A673 (cell line): ENCODE measurements at regions of chr2 and their contacts with region 1.

Region 1: DNA sequence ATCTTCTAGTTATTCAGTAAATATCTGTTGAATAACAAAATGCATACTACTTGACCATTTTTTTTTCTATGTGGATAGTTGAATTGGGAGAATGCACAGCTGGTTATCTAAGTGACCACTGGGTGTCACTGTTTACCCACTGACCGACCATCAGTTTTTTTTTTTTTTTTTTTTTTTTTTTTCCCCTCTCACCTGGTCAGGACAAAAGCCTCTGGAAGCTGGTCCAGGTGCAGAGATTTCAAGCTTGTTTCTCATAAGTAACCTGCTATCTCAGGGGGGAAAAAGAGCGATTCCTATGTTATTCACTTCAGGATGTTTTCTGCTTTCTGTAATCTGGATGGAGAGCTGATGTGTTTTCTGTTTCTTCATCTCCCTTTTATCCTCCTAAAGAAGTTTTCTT is 256.0 kb downstream of the DCDC2C start:
- DNase-seq: peak; percentile 58
- H3K4me3 ChIP-seq: no peak overlapping the region
- H3K27ac ChIP-seq: peak overlapping the region; percentile 78
- H3K4me1 ChIP-seq: peaks cover 70% of the 10 kb centered on the region
- H3K27me3 ChIP-seq: no peaks in the 10 kb centered on the region
- CTCF ChIP-seq: peak; percentile 89

Region 2: GRCh38 chr2:3728104-3729054 is 231.0 kb before region 1 on chr2:
- CTCF ChIA-PET with region 1: interaction called, 7 read pairs
- POLR2A ChIA-PET with region 1: interaction called, 3 read pairs
- intact Hi-C with region 1: loop called (anchors 5 kb)
- DNase-seq: peak; percentile 83
- H3K4me3 ChIP-seq: peak overlapping the region; percentile 12
- H3K27ac ChIP-seq: no peak overlapping the region
- H3K4me1 ChIP-seq: peaks cover 6% of the 10 kb centered on the region
- H3K27me3 ChIP-seq: no peaks in the 10 kb centered on the region
- CTCF ChIP-seq: peak; percentile 65

Region 3: DNA sequence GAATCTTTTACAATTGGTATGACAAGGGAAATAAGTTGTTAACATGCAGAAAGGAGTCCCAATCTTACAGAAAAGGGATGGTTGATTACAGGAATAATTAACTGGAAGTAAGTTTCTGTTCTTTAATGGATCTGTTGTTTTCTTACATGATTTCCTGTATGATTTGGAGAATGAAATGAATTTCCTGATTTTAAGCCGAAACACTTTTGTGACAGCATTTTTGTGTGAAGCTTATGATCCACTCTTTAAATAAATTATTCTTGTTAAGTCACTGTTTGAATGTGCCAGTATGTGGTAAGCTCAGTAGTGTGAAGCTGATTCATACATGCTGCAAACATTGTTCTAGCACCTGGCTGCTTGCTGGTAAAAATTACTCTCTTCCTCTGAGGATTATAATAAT is 260.2 kb after region 1 on chr2:
- CTCF ChIA-PET with region 1: no interaction called
- POLR2A ChIA-PET with region 1: no interaction called
- intact Hi-C with region 1: loop called (anchors 1 kb)
- DNase-seq: peak; percentile 93
- H3K4me3 ChIP-seq: no peak overlapping the region
- H3K27ac ChIP-seq: peak overlapping the region; percentile 74
- H3K4me1 ChIP-seq: peaks cover 39% of the 10 kb centered on the region
- H3K27me3 ChIP-seq: no peaks in the 10 kb centered on the region
- CTCF ChIP-seq: no peak

Region 4: GRCh38 chr2:4465671-4466070 is 506.3 kb after region 1 on chr2:
- CTCF ChIA-PET with region 1: no interaction called
- POLR2A ChIA-PET with region 1: no interaction called
- intact Hi-C with region 1: no loop called
- DNase-seq: peak; percentile 15
- H3K4me3 ChIP-seq: no peak overlapping the region
- H3K27ac ChIP-seq: no peak overlapping the region
- H3K4me1 ChIP-seq: peaks cover 6% of the 10 kb centered on the region
- H3K27me3 ChIP-seq: no peaks in the 10 kb centered on the region
- CTCF ChIP-seq: no peak

Region 5: DNA sequence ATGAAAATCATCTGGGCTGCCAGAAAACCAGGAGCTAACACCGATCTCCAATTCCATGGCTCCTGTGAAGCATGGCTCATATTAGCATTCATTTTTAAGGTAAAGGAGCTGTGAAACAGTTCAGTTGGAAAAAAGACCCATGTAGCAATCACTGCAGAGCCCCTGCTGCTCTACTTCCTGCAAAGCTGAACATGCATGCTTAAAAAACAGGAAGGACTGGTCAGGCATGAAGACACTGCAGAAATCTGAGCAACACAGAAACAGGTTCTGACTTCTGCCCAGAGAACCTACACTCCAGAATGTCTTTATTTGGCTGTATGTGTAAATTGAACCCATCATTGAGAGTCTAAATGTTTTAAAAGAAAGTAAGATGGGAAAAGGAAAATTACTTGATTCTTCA is 694.6 kb after region 1 on chr2:
- CTCF ChIA-PET with region 1: interaction called, 10 read pairs
- POLR2A ChIA-PET with region 1: no interaction called
- intact Hi-C with region 1: no loop called
- DNase-seq: peak; percentile 87
- H3K4me3 ChIP-seq: no peak overlapping the region
- H3K27ac ChIP-seq: peak overlapping the region; percentile 88
- H3K4me1 ChIP-seq: peaks cover 38% of the 10 kb centered on the region
- H3K27me3 ChIP-seq: no peaks in the 10 kb centered on the region
- CTCF ChIP-seq: no peak

Region 6: DNA sequence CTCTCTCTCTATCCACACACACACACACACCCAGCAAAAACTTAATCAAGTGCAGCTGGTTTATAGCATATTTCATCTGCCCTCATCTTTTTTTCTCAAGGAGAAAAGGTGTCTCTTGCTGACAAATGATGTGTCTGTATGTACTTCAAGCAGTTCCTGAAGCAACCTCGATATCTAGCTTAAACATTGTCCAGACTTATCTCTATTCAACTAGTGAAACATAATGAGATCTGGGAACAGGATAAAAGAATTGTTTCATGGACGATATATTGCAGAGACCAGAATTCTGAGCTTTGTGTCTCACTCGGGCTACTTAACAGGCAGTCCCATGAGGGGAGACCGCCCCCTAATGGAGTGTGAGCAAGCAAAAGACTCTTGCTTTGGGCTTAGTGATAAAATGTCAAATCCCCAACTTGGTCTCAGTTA is 803.6 kb after region 1 on chr2:
- CTCF ChIA-PET with region 1: interaction called, 29 read pairs
- POLR2A ChIA-PET with region 1: no interaction called
- intact Hi-C with region 1: loop called (anchors 5 kb)
- DNase-seq: peak; percentile 94
- H3K4me3 ChIP-seq: no peak overlapping the region
- H3K27ac ChIP-seq: peak overlapping the region; percentile 84
- H3K4me1 ChIP-seq: peaks cover 42% of the 10 kb centered on the region
- H3K27me3 ChIP-seq: no peaks in the 10 kb centered on the region
- CTCF ChIP-seq: peak; percentile 93

Region 7: GRCh38 chr2:5098286-5098685 is 1138.9 kb after region 1 on chr2:
- CTCF ChIA-PET with region 1: no interaction called
- POLR2A ChIA-PET with region 1: no interaction called
- intact Hi-C with region 1: no loop called
- DNase-seq: no peak
- H3K4me3 ChIP-seq: no peak overlapping the region
- H3K27ac ChIP-seq: no peak overlapping the region
- H3K4me1 ChIP-seq: no peaks in the 10 kb centered on the region
- H3K27me3 ChIP-seq: no peaks in the 10 kb centered on the region
- CTCF ChIP-seq: no peak

Region 8: GRCh38 chr2:5459041-5459440 is 1499.7 kb after region 1 on chr2:
- CTCF ChIA-PET with region 1: interaction called, 12 read pairs
- POLR2A ChIA-PET with region 1: no interaction called
- intact Hi-C with region 1: no loop called
- DNase-seq: no peak
- H3K4me3 ChIP-seq: no peak overlapping the region
- H3K27ac ChIP-seq: no peak overlapping the region
- H3K4me1 ChIP-seq: no peaks in the 10 kb centered on the region
- H3K27me3 ChIP-seq: no peaks in the 10 kb centered on the region
- CTCF ChIP-seq: no peak

Region 9: DNA sequence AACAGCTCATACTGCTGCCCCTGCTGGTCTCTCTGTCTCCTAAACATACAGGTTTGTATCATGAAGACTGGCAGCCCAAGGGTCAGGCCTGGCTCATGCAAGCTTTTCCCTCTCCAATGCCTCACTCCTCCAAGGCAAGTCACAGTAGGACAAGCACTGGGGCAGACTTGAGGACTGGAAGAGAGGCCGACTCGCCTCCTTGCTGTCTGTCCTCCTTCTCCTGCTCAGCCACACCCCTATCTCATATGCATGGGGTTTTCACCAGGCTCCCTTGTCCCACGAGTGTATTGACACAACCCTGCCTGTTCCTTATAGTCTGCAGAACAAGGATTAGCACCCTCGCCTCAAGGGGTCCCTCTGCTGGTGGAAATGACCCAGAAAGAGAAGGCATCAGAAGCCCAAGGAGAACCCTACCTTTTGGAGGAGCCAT is 1956.5 kb after region 1 on chr2:
- CTCF ChIA-PET with region 1: no interaction called
- POLR2A ChIA-PET with region 1: no interaction called
- intact Hi-C with region 1: loop called (anchors 10 kb)
- DNase-seq: peak; percentile 79
- H3K4me3 ChIP-seq: no peak overlapping the region
- H3K27ac ChIP-seq: no peak overlapping the region
- H3K4me1 ChIP-seq: peaks cover 19% of the 10 kb centered on the region
- H3K27me3 ChIP-seq: no peaks in the 10 kb centered on the region
- CTCF ChIP-seq: peak; percentile 67